Esophagus muscularis mucosa (tissue), 4 donors: ENCODE measurements at regions of chr22 and their contacts with region 1.

Region 1: GRCh38 chr22:34913826-34914225 is 152.1 kb upstream of the ISX start:
- DNase-seq: no peak
- H3K4me3 ChIP-seq: no peak overlapping the region
- H3K27ac ChIP-seq: no peak overlapping the region
- H3K4me1 ChIP-seq: no peaks in the 10 kb centered on the region
- H3K27me3 ChIP-seq: peaks cover 0 to 10% (median 0%) of the 10 kb centered on the region in 4 donors
- CTCF ChIP-seq: no peak
- EP300 ChIP-seq: no peak
- POLR2A ChIP-seq: no peak

Region 2: DNA sequence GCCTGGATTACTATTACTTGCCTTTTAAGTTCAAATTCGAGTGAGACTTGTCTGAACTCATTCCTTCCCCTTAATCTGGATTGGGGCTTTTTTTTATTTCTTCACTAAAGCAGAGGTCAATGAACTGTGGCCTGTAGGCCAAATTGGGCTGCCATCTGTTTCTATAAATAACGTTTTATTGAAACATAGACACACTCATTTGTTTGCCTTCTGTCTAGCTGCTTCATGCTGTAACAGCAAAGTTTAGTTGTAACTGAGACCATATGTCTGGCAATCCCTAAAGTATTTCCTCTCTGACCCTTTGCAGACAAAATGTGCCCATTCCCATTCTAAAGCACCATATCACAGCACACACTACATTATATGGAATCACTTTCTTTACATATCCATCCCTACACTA is 55.8 kb before region 1 on chr22:
- intact Hi-C with region 1: loop called (anchors 5 kb)
- DNase-seq: no peak
- H3K4me3 ChIP-seq: no peak overlapping the region
- H3K27ac ChIP-seq: no peak overlapping the region
- H3K4me1 ChIP-seq: no peaks in the 10 kb centered on the region
- H3K27me3 ChIP-seq: no peaks in the 10 kb centered on the region
- CTCF ChIP-seq: no peak
- EP300 ChIP-seq: no peak
- POLR2A ChIP-seq: no peak

Region 3: GRCh38 chr22:34878996-34879395 is 34.8 kb before region 1 on chr22:
- intact Hi-C with region 1: no loop called
- DNase-seq: no peak
- H3K4me3 ChIP-seq: no peak overlapping the region
- H3K27ac ChIP-seq: no peak overlapping the region
- H3K4me1 ChIP-seq: no peaks in the 10 kb centered on the region
- H3K27me3 ChIP-seq: peaks cover 0 to 7% (median 0%) of the 10 kb centered on the region in 4 donors
- CTCF ChIP-seq: no peak
- EP300 ChIP-seq: no peak
- POLR2A ChIP-seq: no peak